GM10248 (cell line): ENCODE measurements at regions of chr12 and their contacts with region 1.

Region 1: DNA sequence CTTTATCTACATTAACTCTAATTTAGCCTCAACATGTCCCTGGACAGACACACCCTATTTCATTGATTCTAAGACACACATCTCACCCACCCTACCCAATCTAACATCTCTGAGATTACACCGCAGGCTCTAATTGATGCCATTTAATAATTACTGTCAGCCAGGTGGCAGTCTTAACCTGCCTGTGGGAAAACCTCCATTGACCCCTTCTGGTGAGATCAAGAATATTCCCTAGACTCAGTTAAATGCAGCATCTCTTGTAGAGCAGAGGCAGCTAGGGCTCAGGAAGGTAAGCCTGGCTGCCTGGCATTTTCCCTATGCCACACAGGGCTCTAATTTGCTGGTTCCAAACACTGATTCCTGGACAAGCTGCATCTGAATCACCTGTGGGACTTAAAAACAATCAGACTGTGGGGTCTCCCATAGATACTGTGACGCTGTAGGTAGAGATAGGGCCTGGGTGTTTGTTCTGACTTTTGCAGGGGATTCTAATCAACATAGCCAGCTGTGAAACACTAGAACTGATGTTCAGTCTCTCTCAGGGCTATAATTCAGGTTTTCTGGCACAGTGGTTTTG is 14.3 kb downstream of the MCRS1 start:
- DNase-seq: peak; percentile 67
- CTCF ChIP-seq: peak; percentile 56

Region 2: GRCh38 chr12:49413796-49414195 is 139.8 kb before region 1 on chr12:
- CTCF ChIA-PET with region 1: no interaction called
- POLR2A ChIA-PET with region 1: no interaction called
- DNase-seq: no peak
- CTCF ChIP-seq: no peak

Region 3: DNA sequence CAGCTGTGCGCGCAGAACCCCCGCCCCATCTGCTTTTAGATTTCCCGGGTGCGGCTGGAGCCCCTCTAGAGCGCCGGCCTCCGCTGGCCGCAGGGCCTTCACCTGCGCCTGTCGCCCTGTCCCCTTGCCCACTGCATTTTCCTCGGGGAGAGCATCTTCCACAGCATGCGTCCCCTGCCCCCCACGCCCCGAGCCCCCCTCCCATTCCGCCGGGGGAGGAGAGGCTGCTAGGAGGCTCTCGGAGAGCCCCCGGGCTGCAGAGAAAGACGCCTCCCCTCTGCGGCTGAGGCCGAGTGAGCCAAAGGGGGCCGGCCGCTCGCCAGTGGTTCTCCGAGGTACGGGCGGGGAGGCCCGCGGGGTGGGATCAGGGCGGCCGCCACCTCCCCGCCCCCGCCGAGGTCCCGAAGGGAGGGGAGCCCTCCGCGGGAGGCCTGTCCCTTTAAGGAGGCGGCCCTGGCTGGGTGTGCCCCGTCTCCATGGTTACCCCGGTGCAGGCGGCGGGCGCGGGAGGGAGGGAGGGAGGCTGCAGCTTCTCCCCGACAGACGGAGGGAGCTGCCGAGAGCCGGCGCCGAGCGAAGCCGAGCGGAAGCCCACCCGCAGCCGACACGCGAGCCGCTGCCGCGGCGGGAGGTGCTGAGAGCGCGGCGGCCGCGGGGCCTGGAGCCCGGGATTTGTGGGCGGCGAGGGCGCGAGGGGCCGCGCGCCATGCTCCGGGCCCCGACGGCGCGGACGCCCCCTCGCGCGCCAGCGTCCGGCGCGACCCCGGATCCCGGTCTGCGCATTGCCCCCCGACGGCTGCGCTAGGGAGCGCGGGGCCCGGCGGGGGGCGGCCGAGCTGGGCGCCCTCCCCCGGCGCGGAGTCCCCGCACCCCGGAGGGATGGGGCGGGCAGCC is 14.8 kb before region 1 on chr12 and contains the start of gene KCNH3:
- CTCF ChIA-PET with region 1: interaction called, 10 read pairs
- POLR2A ChIA-PET with region 1: no interaction called
- DNase-seq: peak; percentile 94
- CTCF ChIP-seq: no peak

Region 4: GRCh38 chr12:49567611-49568441 is 14.2 kb after region 1 on chr12 and contains the start of gene MCRS1:
- CTCF ChIA-PET with region 1: interaction called, 21 read pairs
- POLR2A ChIA-PET with region 1: interaction called, 4 read pairs
- DNase-seq: peak; percentile 97
- CTCF ChIP-seq: no peak

Region 5: GRCh38 chr12:49623142-49623904 is 69.7 kb after region 1 on chr12 and contains the start of gene PRPF40B:
- CTCF ChIA-PET with region 1: interaction called, 13 read pairs
- POLR2A ChIA-PET with region 1: interaction called, 6 read pairs
- DNase-seq: peak; percentile 96
- CTCF ChIP-seq: peak; percentile 70